Cardiac septum (tissue), 1 donor: ENCODE measurements at regions of chr3 and their contacts with region 1.

Region 1: GRCh38 chr3:126357295-126358037 is at the start of gene KLF15:
- DNase-seq: peak; percentile 93
- total RNA-seq, gene KLF15: 11.5 TPM

Region 2: DNA sequence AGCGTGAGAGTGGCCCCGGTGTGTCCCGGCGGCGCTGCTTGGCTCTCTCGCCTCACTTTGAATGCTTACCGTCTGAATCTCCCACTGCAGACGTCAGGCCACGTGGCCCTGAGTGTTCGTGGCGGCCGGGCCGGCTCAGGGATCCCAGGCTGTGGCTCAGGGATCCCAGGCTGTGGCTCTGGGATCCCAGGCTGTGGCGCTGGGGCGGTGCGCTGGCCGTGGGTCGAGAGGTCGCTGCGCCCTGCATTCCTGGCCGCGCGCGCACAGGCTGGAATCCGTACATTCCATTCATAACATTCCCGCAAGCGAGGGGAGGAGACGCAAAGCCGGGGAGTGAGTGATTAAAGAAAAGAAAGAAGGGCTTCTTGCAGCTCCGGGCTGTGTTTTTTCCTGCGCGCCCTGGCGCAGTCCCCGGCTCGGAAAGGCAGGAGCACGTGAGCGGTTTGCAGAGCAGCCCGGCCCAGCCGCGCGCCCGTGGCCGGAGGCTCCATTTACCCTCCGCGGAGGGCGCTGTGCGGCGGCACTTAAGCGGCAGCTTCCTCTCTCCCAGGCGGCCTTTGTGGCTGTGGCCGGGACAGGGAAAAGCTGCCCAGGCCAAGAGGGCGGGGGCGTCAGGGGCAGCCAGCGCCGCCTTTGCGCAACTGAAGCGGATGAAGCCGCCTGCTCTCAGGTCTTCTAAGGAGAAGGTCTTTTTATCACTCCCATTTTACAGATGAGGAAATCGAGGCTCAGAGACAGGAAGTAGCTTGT is 90.1 kb before region 1 on chr3:
- intact Hi-C with region 1: loop called (anchors 1 kb)
- DNase-seq: peak; percentile 82

Region 3: GRCh38 chr3:126287536-126288241 is 69.8 kb before region 1 on chr3:
- intact Hi-C with region 1: loop called (anchors 5 kb)
- DNase-seq: no peak

Region 4: GRCh38 chr3:126300761-126301481 is 56.5 kb before region 1 on chr3:
- intact Hi-C with region 1: loop called (anchors 5 kb)
- DNase-seq: no peak

Region 5: DNA sequence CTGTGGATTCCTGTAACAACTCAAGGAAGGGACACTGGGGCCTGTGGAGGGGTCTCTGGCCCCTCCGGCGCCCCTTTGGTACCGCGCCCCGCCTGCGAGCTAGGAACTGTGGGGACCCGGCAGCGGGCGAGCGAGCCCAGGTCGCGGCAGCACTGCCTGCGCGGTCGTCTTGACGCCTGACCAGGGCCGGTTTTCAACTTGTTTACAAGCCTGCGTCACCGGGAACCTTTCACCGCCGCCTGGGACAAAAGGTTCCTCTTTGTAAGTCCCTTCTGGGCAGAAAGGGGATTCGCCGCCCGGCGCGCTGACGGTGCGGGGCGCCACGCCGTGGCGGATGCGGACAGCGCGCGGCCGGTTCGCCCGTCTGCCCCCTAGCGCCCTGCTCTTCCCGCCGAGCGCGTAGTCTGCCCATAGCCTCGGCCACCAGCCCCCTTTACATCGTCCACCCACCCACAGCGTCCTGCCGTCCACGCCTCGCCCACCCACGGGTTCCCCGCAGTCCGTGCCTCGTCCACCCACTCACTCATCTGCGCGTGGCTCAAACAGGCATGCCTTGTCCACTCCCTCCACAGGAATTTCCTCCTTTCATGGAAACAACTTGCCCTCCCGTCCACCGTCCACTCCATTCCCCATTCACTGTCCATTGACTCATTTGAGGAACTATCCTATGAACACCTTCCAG is 31.8 kb after region 1 on chr3:
- intact Hi-C with region 1: loop called (anchors 2 kb)
- DNase-seq: peak; percentile 88